ENCODE measurements at regions of chr22 and their contacts with region 1.

Region 1: GRCh38 chr22:25067851-25068421 is 115.4 kb downstream of the KIAA1671 start:
- DNase-seq: no peak
- H3K4me3 Mint-ChIP-seq: no peak overlapping the region
- H3K27ac Mint-ChIP-seq: no peak overlapping the region
- H3K4me1 Mint-ChIP-seq: no peaks in the 10 kb centered on the region
- H3K27me3 Mint-ChIP-seq: no peaks in the 10 kb centered on the region
- CTCF ChIP-seq: no peak

Region 2: GRCh38 chr22:25598609-25599008 is 530.7 kb after region 1 on chr22:
- CTCF ChIA-PET with region 1: no interaction called
- intact Hi-C with region 1: loop called (anchors 10 kb)
- DNase-seq: no peak
- H3K4me3 Mint-ChIP-seq: no peak overlapping the region
- H3K27ac Mint-ChIP-seq: no peak overlapping the region
- H3K4me1 Mint-ChIP-seq: no peaks in the 10 kb centered on the region
- H3K27me3 Mint-ChIP-seq: no peaks in the 10 kb centered on the region
- CTCF ChIP-seq: no peak

Measured in Calu3 (cell line).